ENCODE measurements at regions of chr17 and their contacts with region 1.

Region 1: GRCh38 chr17:39754161-39754951 is 16.6 kb downstream of the GRB7 start:
- DNase-seq: peak; percentile 87
- ATAC-seq: peak; percentile 81
- H3K4me3 ChIP-seq: peak overlapping the region; percentile 63 to 80 (median 73)
- H3K27ac ChIP-seq: peak overlapping the region; percentile 29
- H3K4me1 ChIP-seq: peaks cover 80% of the 10 kb centered on the region
- H3K27me3 ChIP-seq: peaks cover 6 to 43% of the 10 kb centered on the region in 2 experiments
- CTCF ChIP-seq: peak; percentile 95
- EP300 ChIP-seq: peak in 1 of 2 experiments; percentile 5; a peak in 1 of 4 replicates
- POLR2A ChIP-seq: peak in 1 of 2 experiments; percentile 67
- RAD21 ChIP-seq: peak; percentile 100

Region 2: GRCh38 chr17:39668199-39668966 is 86.0 kb before region 1 on chr17 and contains the start of gene PNMT:
- CTCF ChIA-PET with region 1: interaction called, 8 read pairs
- POLR2A ChIA-PET with region 1: interaction called, 3 read pairs
- in situ Hi-C with region 1: loop called (anchors 5 kb)
- intact Hi-C with region 1: loop called (anchors 5 kb)
- DNase-seq: peak; percentile 56
- ATAC-seq: peak; percentile 39
- H3K4me3 ChIP-seq: peak within 1 kb of the TSS; percentile 24 to 66 (median 46); a peak in 5 of 6 replicates
- H3K27ac ChIP-seq: no peak within 1 kb of the TSS
- H3K4me1 ChIP-seq: peaks cover 77% of the 10 kb centered on the region
- H3K27me3 ChIP-seq: peaks cover 11 to 51% of the 10 kb centered on the region in 2 experiments
- CTCF ChIP-seq: peak; percentile 94
- EP300 ChIP-seq: no peak
- POLR2A ChIP-seq: no peak
- RAD21 ChIP-seq: peak; percentile 85
- total RNA-seq, gene PNMT: not detected in 2 replicates

Region 3: GRCh38 chr17:39716879-39717536 is 37.3 kb before region 1 on chr17:
- CTCF ChIA-PET with region 1: interaction called, 14 read pairs
- POLR2A ChIA-PET with region 1: no interaction called
- in situ Hi-C with region 1: no loop called
- intact Hi-C with region 1: no loop called
- DNase-seq: no peak
- ATAC-seq: no peak
- H3K4me3 ChIP-seq: no peak overlapping the region
- H3K27ac ChIP-seq: no peak overlapping the region
- H3K4me1 ChIP-seq: no peaks in the 10 kb centered on the region
- H3K27me3 ChIP-seq: no peaks in the 10 kb centered on the region
- CTCF ChIP-seq: no peak
- EP300 ChIP-seq: no peak
- POLR2A ChIP-seq: no peak
- RAD21 ChIP-seq: no peak

Region 4: DNA sequence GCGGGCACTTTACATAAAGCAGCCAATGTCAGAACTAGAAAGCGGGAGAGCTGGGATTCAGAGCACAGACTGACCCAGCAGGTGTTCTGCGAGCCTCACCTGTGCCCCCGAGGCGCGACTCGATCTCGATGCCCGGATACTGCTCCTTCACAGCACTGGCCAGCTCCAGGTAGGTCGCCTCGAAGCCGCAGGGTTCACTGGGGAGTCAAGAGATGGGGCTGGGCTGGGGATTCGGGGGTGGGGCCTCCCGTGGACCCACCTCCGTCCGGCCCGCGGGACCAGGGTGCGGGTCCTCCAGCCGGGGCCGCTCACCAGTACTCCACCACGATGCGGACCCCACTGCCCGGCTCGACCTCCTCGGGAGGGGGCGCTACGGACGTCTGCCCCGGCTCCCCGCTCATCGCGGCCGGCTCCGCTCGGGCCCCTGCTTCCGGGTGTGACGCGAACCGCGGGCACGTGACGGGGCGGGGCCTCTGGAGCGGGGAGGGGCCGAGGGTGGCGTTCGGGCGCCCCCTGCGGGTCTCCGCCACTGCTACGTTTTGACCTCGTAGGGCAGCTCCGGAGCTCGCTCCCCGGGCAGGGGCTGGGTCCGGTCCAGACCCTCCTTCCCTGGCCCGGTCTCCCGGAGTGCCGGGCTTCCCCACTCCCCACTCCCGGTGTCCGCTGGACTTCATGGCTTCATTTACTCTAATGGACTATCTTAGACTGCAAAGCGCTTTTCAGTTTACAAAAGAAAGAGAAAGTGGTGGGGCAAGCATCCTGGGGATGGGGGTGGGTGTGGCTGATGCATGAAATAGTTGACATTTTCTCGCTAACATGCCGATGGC is 24.0 kb before region 1 on chr17 and contains the start of gene MIEN1:
- CTCF ChIA-PET with region 1: interaction called, 29 read pairs
- POLR2A ChIA-PET with region 1: interaction called, 13 read pairs
- in situ Hi-C with region 1: no loop called
- intact Hi-C with region 1: loop called (anchors 1 kb)
- DNase-seq: peak; percentile 78
- ATAC-seq: peak; percentile 89
- H3K4me3 ChIP-seq: peak within 1 kb of the TSS; percentile 68 to 81 (median 74)
- H3K27ac ChIP-seq: peak within 1 kb of the TSS; percentile 65
- H3K4me1 ChIP-seq: peaks cover 21% of the 10 kb centered on the region
- H3K27me3 ChIP-seq: no peaks in the 10 kb centered on the region
- CTCF ChIP-seq: peak; percentile 93
- EP300 ChIP-seq: 0 out of 4 replicates have a peak, but pooled peaks have one; percentile 3 to 49
- POLR2A ChIP-seq: peak; percentile 56 to 84
- RAD21 ChIP-seq: peak; percentile 97
- total RNA-seq, gene MIEN1: 40.6 and 48.6 TPM in 2 replicates

Region 5: GRCh38 chr17:39738931-39739884 is 15.1 kb before region 1 on chr17:
- CTCF ChIA-PET with region 1: interaction called, 11 read pairs
- POLR2A ChIA-PET with region 1: interaction called, 79 read pairs
- in situ Hi-C with region 1: no loop called
- intact Hi-C with region 1: loop called (anchors 1 kb)
- DNase-seq: peak; percentile 100
- ATAC-seq: peak; percentile 69
- H3K4me3 ChIP-seq: peak overlapping the region; percentile 89 to 96 (median 95)
- H3K27ac ChIP-seq: peak overlapping the region; percentile 97
- H3K4me1 ChIP-seq: peaks cover 44% of the 10 kb centered on the region
- H3K27me3 ChIP-seq: no peaks in the 10 kb centered on the region; a peak in 1 of 5 replicates
- CTCF ChIP-seq: peak; percentile 40
- EP300 ChIP-seq: peak in 1 of 2 experiments; percentile 76; a peak in 2 of 4 replicates
- POLR2A ChIP-seq: peak; percentile 72 to 79
- RAD21 ChIP-seq: peak; percentile 44

Region 6: GRCh38 chr17:41392278-41392677 is 1637.9 kb after region 1 on chr17:
- CTCF ChIA-PET with region 1: no interaction called
- POLR2A ChIA-PET with region 1: no interaction called
- in situ Hi-C with region 1: no loop called
- intact Hi-C with region 1: no loop called
- DNase-seq: no peak
- ATAC-seq: no peak
- H3K4me3 ChIP-seq: no peak overlapping the region
- H3K27ac ChIP-seq: no peak overlapping the region
- H3K4me1 ChIP-seq: no peaks in the 10 kb centered on the region
- H3K27me3 ChIP-seq: peaks cover 2 to 14% of the 10 kb centered on the region in 2 experiments; a peak in 2 of 5 replicates
- CTCF ChIP-seq: no peak
- EP300 ChIP-seq: no peak
- POLR2A ChIP-seq: no peak
- RAD21 ChIP-seq: no peak

Measured in HepG2 (cell line).